HepG2 (cell line): ENCODE measurements at regions of chr20 and their contacts with region 1.

Region 1: DNA sequence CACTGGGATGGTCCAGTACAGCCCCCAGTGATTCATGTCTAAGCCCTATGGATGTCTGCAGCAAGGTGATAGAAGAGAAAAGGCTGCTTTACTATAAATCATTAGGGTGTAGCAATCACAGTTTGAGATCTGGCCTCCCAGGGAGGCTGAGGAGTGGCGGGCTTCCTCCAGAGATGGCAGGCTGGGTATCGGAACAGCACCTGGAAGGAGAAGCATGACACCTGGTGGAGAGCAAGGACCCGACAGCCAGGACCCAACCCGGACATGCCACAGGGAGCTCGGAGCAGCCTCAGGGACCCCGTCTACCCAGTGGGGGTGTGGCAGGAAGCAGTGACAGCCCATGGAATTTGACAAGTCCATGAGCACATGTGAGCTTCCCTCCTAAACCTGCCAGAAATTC is 114.8 kb upstream of the CD93 start:
- DNase-seq: peak; percentile 62
- ATAC-seq: peak; percentile 97
- H3K4me3 ChIP-seq: no peak overlapping the region
- H3K27ac ChIP-seq: no peak overlapping the region
- H3K4me1 ChIP-seq: no peaks in the 10 kb centered on the region
- H3K27me3 ChIP-seq: peaks cover 0 to 14% of the 10 kb centered on the region in 2 experiments; a peak in 2 of 5 replicates
- CTCF ChIP-seq: peak; percentile 92
- EP300 ChIP-seq: no peak
- POLR2A ChIP-seq: no peak
- RAD21 ChIP-seq: peak; percentile 92

Region 2: GRCh38 chr20:22333885-22334545 is 866.9 kb before region 1 on chr20:
- CTCF ChIA-PET with region 1: no interaction called
- POLR2A ChIA-PET with region 1: no interaction called
- in situ Hi-C with region 1: loop called (anchors 10 kb)
- intact Hi-C with region 1: no loop called
- DNase-seq: peak; percentile 71
- ATAC-seq: peak; percentile 92
- H3K4me3 ChIP-seq: no peak overlapping the region
- H3K27ac ChIP-seq: no peak overlapping the region
- H3K4me1 ChIP-seq: no peaks in the 10 kb centered on the region
- H3K27me3 ChIP-seq: peaks cover 4 to 20% of the 10 kb centered on the region in 2 experiments; a peak in 3 of 5 replicates
- CTCF ChIP-seq: peak; percentile 90
- EP300 ChIP-seq: no peak
- POLR2A ChIP-seq: no peak
- RAD21 ChIP-seq: peak; percentile 80

Region 3: GRCh38 chr20:22846863-22847262 is 354.1 kb before region 1 on chr20:
- CTCF ChIA-PET with region 1: no interaction called
- POLR2A ChIA-PET with region 1: no interaction called
- in situ Hi-C with region 1: no loop called
- intact Hi-C with region 1: loop called (anchors 2 kb)
- DNase-seq: no peak
- ATAC-seq: no peak
- H3K4me3 ChIP-seq: no peak overlapping the region
- H3K27ac ChIP-seq: no peak overlapping the region
- H3K4me1 ChIP-seq: no peaks in the 10 kb centered on the region
- H3K27me3 ChIP-seq: no peaks in the 10 kb centered on the region
- CTCF ChIP-seq: no peak
- EP300 ChIP-seq: no peak
- POLR2A ChIP-seq: no peak
- RAD21 ChIP-seq: no peak

Region 4: DNA sequence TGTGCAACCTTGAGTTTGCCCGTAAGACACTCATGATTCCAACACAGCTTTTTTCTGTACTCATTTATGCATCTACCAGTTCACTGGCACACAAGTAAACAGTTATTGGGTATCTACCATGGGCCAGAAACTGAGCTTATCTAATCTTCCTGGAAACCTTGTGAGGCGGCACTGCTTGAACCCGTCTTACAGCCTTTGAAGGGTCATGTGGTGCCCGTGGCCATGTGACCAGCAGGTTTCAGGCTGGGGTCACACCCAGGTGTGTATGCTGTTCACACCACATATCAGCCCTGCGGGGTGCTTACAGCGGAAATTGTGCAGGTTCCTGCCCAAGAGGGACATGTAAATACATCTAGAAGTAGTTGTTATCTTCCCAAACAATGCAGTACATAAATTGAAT is 157.5 kb before region 1 on chr20:
- CTCF ChIA-PET with region 1: interaction called, 6 read pairs
- POLR2A ChIA-PET with region 1: no interaction called
- in situ Hi-C with region 1: no loop called
- intact Hi-C with region 1: loop called (anchors 1 kb)
- DNase-seq: no peak
- ATAC-seq: peak; percentile 56
- H3K4me3 ChIP-seq: no peak overlapping the region
- H3K27ac ChIP-seq: no peak overlapping the region
- H3K4me1 ChIP-seq: no peaks in the 10 kb centered on the region
- H3K27me3 ChIP-seq: peaks cover 0 to 24% of the 10 kb centered on the region in 2 experiments; a peak in 3 of 5 replicates
- CTCF ChIP-seq: peak; percentile 68
- EP300 ChIP-seq: no peak
- POLR2A ChIP-seq: no peak
- RAD21 ChIP-seq: no peak

Region 5: DNA sequence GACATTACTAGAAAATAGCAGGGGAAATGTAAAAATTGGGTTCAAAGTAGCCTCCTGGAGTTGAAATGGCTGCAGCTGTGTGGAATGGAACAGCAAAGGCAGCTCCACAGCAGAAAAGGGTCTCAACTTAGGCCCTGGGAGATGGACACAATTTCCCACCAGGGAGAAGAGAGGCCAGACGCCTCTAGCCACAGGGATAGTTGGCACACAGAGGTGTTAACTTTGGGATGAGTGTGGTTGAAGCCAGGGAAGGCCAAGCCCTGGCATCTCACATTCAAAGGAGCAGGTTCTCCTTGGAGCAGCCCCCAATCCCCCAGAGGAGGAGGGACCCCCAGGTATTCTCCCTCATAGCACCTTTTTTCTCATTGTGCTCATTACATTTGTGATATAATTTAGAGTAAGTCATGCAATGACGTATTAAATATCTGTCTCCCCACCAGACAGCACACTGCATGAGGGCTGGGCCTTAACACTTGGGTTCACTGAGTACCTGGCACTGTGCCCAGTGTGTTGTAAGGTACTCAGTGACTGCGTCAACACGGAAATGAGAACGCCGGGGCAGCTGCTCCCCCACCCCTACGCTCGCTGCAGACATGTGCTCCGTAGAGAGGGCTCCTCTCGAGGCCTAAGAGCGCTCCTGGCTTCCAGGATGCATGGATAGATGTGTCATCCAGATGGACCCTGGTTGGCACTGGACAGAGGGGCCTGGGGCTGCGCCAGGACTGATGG is 38.8 kb before region 1 on chr20:
- CTCF ChIA-PET with region 1: no interaction called
- POLR2A ChIA-PET with region 1: no interaction called
- in situ Hi-C with region 1: no loop called
- intact Hi-C with region 1: no loop called
- DNase-seq: peak; percentile 73
- ATAC-seq: peak; percentile 10; the same call in 2 of the 3 replicates
- H3K4me3 ChIP-seq: no peak overlapping the region
- H3K27ac ChIP-seq: no peak overlapping the region
- H3K4me1 ChIP-seq: peaks cover 18% of the 10 kb centered on the region
- H3K27me3 ChIP-seq: peaks cover 4 to 22% of the 10 kb centered on the region in 2 experiments; a peak in 3 of 5 replicates
- CTCF ChIP-seq: no peak
- EP300 ChIP-seq: no peak
- POLR2A ChIP-seq: no peak
- RAD21 ChIP-seq: no peak